ENCODE measurements at regions of chr1 and their contacts with region 1.

Region 1: GRCh38 chr1:95043141-95043980 is 29.4 kb downstream of the ALG14 start:
- DNase-seq: peak; percentile 88 to 97
- H3K4me3 ChIP-seq: no peak overlapping the region
- CTCF ChIP-seq: peak in 1 of 3 donors; percentile 95
- POLR2A ChIP-seq: no peak

Region 2: GRCh38 chr1:94854458-94855306 is 188.7 kb before region 1 on chr1:
- intact Hi-C with region 1: loop called (anchors 5 kb)
- DNase-seq: peak; percentile 90 to 96
- H3K4me3 ChIP-seq: no peak overlapping the region
- CTCF ChIP-seq: peak in 1 of 3 donors; percentile 95
- POLR2A ChIP-seq: no peak

Region 3: DNA sequence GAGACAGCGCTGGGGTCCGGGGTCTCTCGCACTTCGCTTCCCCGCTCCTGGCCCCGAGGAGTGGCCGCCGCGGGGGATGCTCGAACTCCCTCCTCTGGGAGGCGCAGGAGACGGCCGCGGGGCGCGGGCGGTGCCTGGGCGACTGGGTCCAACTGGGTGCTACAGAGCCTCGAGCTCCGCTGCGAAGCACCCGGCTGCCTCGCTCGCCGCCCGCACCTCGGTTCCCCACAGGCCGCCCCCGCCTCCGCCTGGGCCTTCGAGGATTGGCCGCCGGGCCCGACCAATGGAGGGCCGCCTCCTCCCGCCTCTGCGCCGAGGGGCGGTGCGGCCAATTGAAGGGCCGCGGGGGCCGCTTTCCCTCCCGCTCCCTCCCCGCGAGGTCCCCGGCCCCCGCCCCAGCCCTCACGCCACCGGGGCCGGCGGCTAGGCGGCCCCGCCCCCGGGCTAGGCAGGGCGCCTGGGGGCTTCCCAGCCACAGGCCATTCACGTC is 116.4 kb before region 1 on chr1 and contains the start of gene CNN3:
- intact Hi-C with region 1: no loop called
- DNase-seq: peak; percentile 82 to 98
- H3K4me3 ChIP-seq: peak within 1 kb of the TSS; percentile 73
- CTCF ChIP-seq: no peak
- POLR2A ChIP-seq: peak in 1 of 2 donors; percentile 78
- total RNA-seq, gene CNN3: 30.7 to 94.3 (median 47.8) TPM

Region 4: DNA sequence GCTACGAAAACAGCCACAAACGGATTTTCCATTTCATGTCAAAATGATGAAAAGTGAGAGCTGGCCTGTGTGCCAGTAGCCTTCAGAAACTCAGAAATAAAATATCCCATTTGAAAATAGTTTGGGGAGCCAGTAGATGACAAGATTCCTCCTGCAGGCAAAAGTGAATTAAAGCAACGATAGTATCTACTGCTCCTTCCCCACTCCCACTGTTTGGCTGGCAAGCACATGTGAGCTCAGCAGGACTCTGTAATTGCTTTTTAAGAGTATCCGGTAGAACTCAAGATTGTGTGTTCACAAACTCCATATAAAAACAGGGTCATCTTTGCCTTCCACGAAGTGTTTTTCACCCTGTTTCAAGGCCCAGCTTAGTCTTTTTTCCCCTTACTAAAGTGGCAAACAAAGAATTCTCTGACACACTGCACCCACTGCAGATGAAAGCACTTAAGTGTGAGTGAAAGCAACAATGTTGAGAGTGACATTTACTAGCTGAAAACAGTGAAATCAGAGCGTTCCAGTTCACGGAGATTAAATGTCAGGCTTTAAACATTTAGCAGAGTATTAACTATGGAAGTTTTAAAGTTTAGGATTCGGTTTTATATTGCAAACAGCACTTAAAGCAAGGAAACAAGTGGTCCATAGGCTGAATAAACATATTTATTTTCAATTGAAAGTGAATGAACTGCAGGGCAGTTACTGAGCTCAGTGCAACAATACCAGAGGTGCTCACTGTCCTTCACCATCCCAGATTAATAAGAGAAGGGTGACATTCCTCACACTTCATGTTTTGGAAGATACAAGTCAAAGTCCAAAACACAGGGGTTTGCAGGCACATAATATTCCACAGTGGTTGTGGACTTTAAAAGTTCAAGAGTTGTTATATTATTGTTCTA is 40.6 kb before region 1 on chr1:
- intact Hi-C with region 1: no loop called
- DNase-seq: no peak
- H3K4me3 ChIP-seq: no peak overlapping the region
- CTCF ChIP-seq: no peak
- POLR2A ChIP-seq: no peak

Region 5: DNA sequence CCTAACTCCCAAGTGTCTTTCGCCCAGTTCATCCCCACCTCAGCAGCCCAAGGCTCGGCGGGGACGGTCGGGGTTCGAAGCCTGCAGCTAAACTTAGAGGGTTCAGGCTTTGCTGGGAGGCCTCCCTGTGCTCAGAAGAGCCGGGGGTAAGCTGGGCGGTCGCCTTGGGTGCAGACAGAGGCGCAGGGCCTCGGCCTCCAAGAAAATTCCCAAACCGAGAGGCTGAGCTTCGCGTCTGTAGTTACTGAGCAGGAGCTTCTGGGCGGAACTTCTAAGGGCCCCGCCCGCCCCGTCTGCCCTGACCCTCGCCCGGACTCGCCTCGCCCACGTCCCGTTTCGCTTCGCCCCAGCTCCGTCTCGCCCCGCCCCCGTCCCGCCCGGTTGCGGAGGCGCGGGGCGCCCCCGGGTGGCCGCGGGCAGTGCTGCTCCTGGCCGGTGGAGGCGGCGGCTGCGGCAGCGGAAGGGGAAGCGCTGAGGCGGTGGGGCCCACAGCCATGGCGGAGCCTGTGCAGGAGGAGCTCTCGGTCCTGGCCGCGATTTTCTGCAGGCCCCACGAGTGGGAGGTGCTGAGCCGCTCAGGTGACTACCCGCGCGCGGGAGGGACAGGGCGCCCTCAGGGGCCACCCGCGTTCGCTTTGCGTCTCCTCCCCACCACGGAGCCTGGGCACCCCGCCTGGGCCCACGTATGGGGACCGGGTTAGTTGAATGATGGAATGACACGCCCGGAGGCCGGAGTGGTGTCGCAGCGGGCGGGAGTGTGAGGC is 190.6 kb after region 1 on chr1 and contains the start of gene RWDD3:
- intact Hi-C with region 1: loop called (anchors 5 kb)
- DNase-seq: peak; percentile 92 to 98
- H3K4me3 ChIP-seq: peak within 1 kb of the TSS; percentile 34
- CTCF ChIP-seq: no peak
- POLR2A ChIP-seq: peak in 1 of 2 donors; percentile 33
- total RNA-seq, gene RWDD3: 5.9 to 16.2 (median 10.8) TPM

Measured in lower leg skin (tissue), 4 donors.